Naive thymus-derived CD4-positive, alpha-beta T cell (primary cell): ENCODE measurements at regions of chr12 and their contacts with region 1.

Region 1: GRCh38 chr12:31989571-31990362 is 30.6 kb downstream of the RESF1 start:
- DNase-seq: no peak
- ATAC-seq: no peak
- H3K4me3 ChIP-seq: no peak overlapping the region
- H3K4me3 Mint-ChIP-seq: peak overlapping the region in 1 of 10 donors; percentile 81
- H3K27ac ChIP-seq: no peak overlapping the region
- H3K27ac Mint-ChIP-seq: peak overlapping the region in 8 of 9 donors; percentile 4 to 82 (median 70)
- H3K4me1 ChIP-seq: peaks cover 0 to 5% of the 10 kb centered on the region in 2 donors
- H3K4me1 Mint-ChIP-seq: peaks cover 5 to 55% (median 38%) of the 10 kb centered on the region in 7 donors
- H3K27me3 ChIP-seq: no peaks in the 10 kb centered on the region
- H3K27me3 Mint-ChIP-seq: no peaks in the 10 kb centered on the region

Region 2: DNA sequence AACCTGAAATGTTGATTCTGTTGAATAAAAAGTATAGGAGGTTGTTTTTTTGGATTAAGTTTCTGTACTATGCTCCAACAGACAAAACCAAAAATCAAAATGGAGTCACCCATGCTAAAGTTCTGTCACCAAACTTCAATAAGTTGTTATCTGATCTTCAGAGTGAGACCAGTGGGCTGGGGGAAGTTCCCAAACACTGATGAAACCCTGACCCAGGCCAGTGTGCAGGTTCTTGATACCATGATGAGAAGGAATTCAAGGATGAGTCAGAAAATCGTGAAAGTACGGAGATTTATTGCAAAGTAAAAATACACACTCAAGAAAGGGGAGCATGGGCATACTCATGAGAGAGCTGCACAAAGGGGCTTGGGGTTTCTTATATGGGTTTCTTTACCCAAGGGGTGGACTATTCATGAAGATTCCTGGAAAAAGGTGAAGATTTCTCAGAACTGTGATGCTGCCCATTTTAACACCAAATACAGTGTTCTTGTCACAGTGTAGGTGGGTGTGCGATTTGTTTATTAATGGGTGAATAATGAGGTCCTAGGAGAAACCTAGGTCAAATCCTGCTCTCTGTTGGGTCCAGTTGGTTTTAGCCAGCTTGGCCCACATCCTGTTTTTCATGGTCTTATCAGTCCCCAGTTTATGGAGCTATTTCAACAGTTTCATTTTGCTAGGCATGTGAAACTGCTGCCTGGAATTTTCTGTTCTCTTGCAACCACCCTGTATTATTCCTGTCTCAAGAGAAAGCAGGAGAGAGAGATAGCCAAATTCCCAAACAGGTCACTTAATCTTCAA is 371.3 kb before region 1 on chr12:
- CTCF ChIA-PET with region 1: no interaction called
- POLR2A ChIA-PET with region 1: no interaction called
- intact Hi-C with region 1: no loop called
- DNase-seq: no peak
- ATAC-seq: no peak
- H3K4me3 ChIP-seq: no peak overlapping the region
- H3K4me3 Mint-ChIP-seq: no peak overlapping the region
- H3K27ac ChIP-seq: no peak overlapping the region
- H3K27ac Mint-ChIP-seq: no peak overlapping the region
- H3K4me1 ChIP-seq: no peaks in the 10 kb centered on the region
- H3K4me1 Mint-ChIP-seq: no peaks in the 10 kb centered on the region
- H3K27me3 ChIP-seq: no peaks in the 10 kb centered on the region
- H3K27me3 Mint-ChIP-seq: peaks cover 0 to 6% (median 4%) of the 10 kb centered on the region in 5 donors

Region 3: GRCh38 chr12:32002848-32003493 is 13.2 kb after region 1 on chr12:
- CTCF ChIA-PET with region 1: interaction called, 3 read pairs
- POLR2A ChIA-PET with region 1: interaction called, 13 read pairs
- intact Hi-C with region 1: loop called in 1 of 2 experiments (anchors 2 kb)
- DNase-seq: no peak
- ATAC-seq: no peak
- H3K4me3 ChIP-seq: no peak overlapping the region
- H3K4me3 Mint-ChIP-seq: no peak overlapping the region
- H3K27ac ChIP-seq: peak overlapping the region; percentile 41
- H3K27ac Mint-ChIP-seq: peak overlapping the region in 8 of 9 donors; percentile 18 to 87 (median 78)
- H3K4me1 ChIP-seq: no peaks in the 10 kb centered on the region
- H3K4me1 Mint-ChIP-seq: peaks cover 0 to 11% (median 8%) of the 10 kb centered on the region in 7 donors
- H3K27me3 ChIP-seq: no peaks in the 10 kb centered on the region
- H3K27me3 Mint-ChIP-seq: no peaks in the 10 kb centered on the region

Region 4: GRCh38 chr12:32025906-32026305 is 36.1 kb after region 1 on chr12:
- CTCF ChIA-PET with region 1: no interaction called
- POLR2A ChIA-PET with region 1: no interaction called
- intact Hi-C with region 1: loop called in 1 of 2 experiments (anchors 5 kb)
- DNase-seq: peak; percentile 7 to 87 (median 78)
- ATAC-seq: peak; percentile 94
- H3K4me3 ChIP-seq: no peak overlapping the region
- H3K4me3 Mint-ChIP-seq: peak overlapping the region; percentile 14 to 64 (median 40)
- H3K27ac ChIP-seq: peak overlapping the region; percentile 26
- H3K27ac Mint-ChIP-seq: peak overlapping the region; percentile 57 to 92 (median 79)
- H3K4me1 ChIP-seq: peaks cover 12 to 24% of the 10 kb centered on the region in 2 donors
- H3K4me1 Mint-ChIP-seq: peaks cover 9 to 51% (median 37%) of the 10 kb centered on the region in 7 donors
- H3K27me3 ChIP-seq: no peaks in the 10 kb centered on the region
- H3K27me3 Mint-ChIP-seq: no peaks in the 10 kb centered on the region